Naive thymus-derived CD4-positive, alpha-beta T cell (primary cell): ENCODE measurements at regions of chr9 and their contacts with region 1.

Region 1: DNA sequence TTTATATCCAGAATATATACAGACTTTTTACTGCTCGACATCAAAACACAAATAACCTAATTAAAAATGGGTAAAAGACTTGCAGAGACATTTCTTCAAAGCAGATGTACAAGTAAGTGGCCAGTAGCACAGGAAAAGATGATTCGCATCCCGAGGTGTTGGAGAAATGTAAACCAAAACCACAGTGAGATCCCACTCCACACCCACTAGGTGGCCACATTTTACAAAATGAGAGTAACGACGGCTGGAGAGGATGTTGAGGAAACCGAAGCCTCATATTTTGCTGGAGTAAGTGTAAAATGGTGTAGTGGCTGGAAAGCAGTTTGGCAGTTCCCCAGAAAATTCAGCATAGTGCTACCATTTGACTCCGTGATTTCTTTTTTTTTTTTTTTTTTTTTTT is 21.2 kb upstream of the GBGT1 start:
- DNase-seq: peak in 8 of 9 donors; percentile 15 to 59 (median 38)
- ATAC-seq: peak; percentile 72
- H3K4me3 ChIP-seq: no peak overlapping the region
- H3K4me3 Mint-ChIP-seq: peak overlapping the region in 5 of 10 donors; percentile 2 to 47 (median 38)
- H3K27ac ChIP-seq: no peak overlapping the region
- H3K27ac Mint-ChIP-seq: peak overlapping the region in 1 of 9 donors; percentile 38
- H3K4me1 ChIP-seq: peaks cover 0 to 5% of the 10 kb centered on the region in 2 donors
- H3K4me1 Mint-ChIP-seq: peaks cover 8 to 18% (median 12%) of the 10 kb centered on the region in 7 donors
- H3K27me3 ChIP-seq: peaks cover 0 to 3% of the 10 kb centered on the region in 2 donors
- H3K27me3 Mint-ChIP-seq: peaks cover 12 to 52% (median 18%) of the 10 kb centered on the region in 5 donors

Region 2: GRCh38 chr9:133275105-133276000 is 90.4 kb after region 1 on chr9 and contains the start of gene ABO:
- CTCF ChIA-PET with region 1: no interaction called
- POLR2A ChIA-PET with region 1: no interaction called
- intact Hi-C with region 1: loop called in 1 of 2 experiments (anchors 5 kb)
- DNase-seq: peak in 1 of 9 donors; percentile 33
- ATAC-seq: peak; percentile 48
- H3K4me3 ChIP-seq: no peak within 1 kb of the TSS
- H3K4me3 Mint-ChIP-seq: peak within 1 kb of the TSS in 6 of 10 donors; percentile 4 to 64 (median 30)
- H3K27ac ChIP-seq: no peak within 1 kb of the TSS
- H3K27ac Mint-ChIP-seq: peak within 1 kb of the TSS in 1 of 9 donors; percentile 66
- H3K4me1 ChIP-seq: no peaks in the 10 kb centered on the region
- H3K4me1 Mint-ChIP-seq: peaks cover 0 to 14% (median 4%) of the 10 kb centered on the region in 7 donors
- H3K27me3 ChIP-seq: no peaks in the 10 kb centered on the region
- H3K27me3 Mint-ChIP-seq: peaks cover 36 to 60% (median 49%) of the 10 kb centered on the region in 5 donors
- total RNA-seq, gene ABO: 1.7 to 3.3 TPM in 2 of 5 experiments, not detected in the others

Region 3: DNA sequence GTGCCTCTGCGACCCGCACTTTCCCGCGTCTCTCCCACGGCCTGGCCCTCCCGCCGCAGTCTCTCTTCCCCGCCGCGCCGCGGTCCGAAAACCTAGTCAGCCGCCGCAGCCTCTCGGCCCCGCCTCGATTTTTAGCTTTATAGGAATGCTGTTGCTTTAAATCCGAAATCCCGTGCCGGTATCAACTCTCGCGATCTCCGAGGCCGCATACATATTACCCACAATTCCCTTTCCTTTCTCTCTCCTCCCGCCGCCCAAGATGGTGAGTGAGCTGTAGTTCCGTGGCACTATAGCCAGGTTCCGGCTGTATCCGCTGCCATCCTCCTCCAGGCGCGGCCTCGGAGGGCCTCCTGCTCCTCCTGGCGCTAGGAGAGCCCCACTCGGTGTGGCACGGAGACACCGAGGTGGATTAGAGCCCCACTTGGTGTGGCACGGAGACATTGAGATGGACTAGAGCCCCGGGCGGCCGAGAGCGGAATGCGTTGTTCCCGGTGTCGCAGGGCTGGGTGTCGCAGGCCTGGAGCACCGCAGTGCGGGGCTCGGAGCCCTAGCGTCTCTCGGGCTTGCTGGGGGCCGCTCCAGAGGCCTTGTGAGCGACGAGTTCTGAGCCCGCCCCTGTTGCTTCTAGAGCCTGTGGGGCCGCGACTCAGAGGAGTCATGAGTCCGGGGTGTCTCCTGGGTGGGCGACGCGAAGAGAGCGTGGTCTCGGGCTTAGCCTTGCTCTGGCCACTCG is 163.2 kb after region 1 on chr9 and contains the starts of genes MED22 and RPL7A:
- CTCF ChIA-PET with region 1: interaction called, 3 read pairs
- POLR2A ChIA-PET with region 1: no interaction called
- intact Hi-C with region 1: loop called in 1 of 2 experiments (anchors 1 kb)
- DNase-seq: peak; percentile 72 to 95 (median 92)
- ATAC-seq: peak; percentile 95
- H3K4me3 ChIP-seq: peak within 1 kb of the TSS; percentile 93
- H3K4me3 Mint-ChIP-seq: peak within 1 kb of the TSS; percentile 94 to 100 (median 98)
- H3K27ac ChIP-seq: peak within 1 kb of the TSS; percentile 98
- H3K27ac Mint-ChIP-seq: peak within 1 kb of the TSS; percentile 87 to 99 (median 97)
- H3K4me1 ChIP-seq: peaks cover 19 to 20% of the 10 kb centered on the region in 2 donors
- H3K4me1 Mint-ChIP-seq: peaks cover 23 to 46% (median 39%) of the 10 kb centered on the region in 7 donors
- H3K27me3 ChIP-seq: no peaks in the 10 kb centered on the region
- H3K27me3 Mint-ChIP-seq: peaks cover 0 to 2% (median 0%) of the 10 kb centered on the region in 5 donors
- total RNA-seq, gene MED22: 26.5 to 44.6 (median 32.8) TPM
- total RNA-seq, gene RPL7A: 2,002 to 2,815 (median 2,428) TPM

Region 4: GRCh38 chr9:133375724-133376654 is 191.0 kb after region 1 on chr9 and contains the starts of genes STKLD1 and SURF4:
- CTCF ChIA-PET with region 1: interaction called, 21 read pairs
- POLR2A ChIA-PET with region 1: interaction called, 3 read pairs
- intact Hi-C with region 1: loop called (anchors 1 to 10 kb)
- DNase-seq: peak; percentile 86 to 99 (median 93)
- ATAC-seq: peak; percentile 95
- H3K4me3 ChIP-seq: peak within 1 kb of the TSS; percentile 58
- H3K4me3 Mint-ChIP-seq: peak within 1 kb of the TSS; percentile 84 to 98 (median 92)
- H3K27ac ChIP-seq: peak within 1 kb of the TSS; percentile 98
- H3K27ac Mint-ChIP-seq: peak within 1 kb of the TSS; percentile 72 to 99 (median 96)
- H3K4me1 ChIP-seq: peaks cover 31 to 38% of the 10 kb centered on the region in 2 donors
- H3K4me1 Mint-ChIP-seq: peaks cover 26 to 47% (median 34%) of the 10 kb centered on the region in 7 donors
- H3K27me3 ChIP-seq: no peaks in the 10 kb centered on the region
- H3K27me3 Mint-ChIP-seq: peaks cover 0 to 4% (median 0%) of the 10 kb centered on the region in 5 donors
- total RNA-seq, gene STKLD1: 1.1 to 1.8 (median 1.5) TPM
- total RNA-seq, gene SURF4: 72.5 to 196 (median 75.1) TPM

Region 5: DNA sequence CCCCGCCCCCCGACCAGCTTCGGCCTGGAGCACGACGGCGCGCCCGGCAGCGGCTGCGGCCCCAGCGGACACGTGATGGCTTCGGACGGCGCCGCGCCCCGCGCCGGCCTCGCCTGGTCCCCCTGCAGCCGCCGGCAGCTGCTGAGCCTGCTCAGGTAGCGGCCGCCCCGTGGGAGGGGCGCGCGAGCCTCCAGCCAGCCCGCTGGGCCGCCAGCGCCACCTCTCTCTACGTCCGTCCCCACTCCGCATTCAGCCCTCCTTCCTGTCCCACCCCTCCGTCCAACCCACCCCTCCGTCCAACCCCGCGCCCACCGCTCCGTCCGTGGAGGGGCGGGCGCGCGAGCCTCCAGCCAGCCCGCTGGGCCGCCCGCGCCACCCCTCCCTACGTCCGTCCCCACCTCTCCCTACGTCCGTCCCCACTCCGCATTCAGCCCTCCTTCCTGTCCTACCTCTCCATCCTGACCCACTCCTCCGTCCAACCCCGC is 243.7 kb after region 1 on chr9:
- CTCF ChIA-PET with region 1: no interaction called
- POLR2A ChIA-PET with region 1: no interaction called
- intact Hi-C with region 1: loop called in 1 of 2 experiments (anchors 1 kb)
- DNase-seq: no peak
- ATAC-seq: no peak
- H3K4me3 ChIP-seq: no peak overlapping the region
- H3K4me3 Mint-ChIP-seq: peak overlapping the region in 1 of 10 donors; percentile 80
- H3K27ac ChIP-seq: no peak overlapping the region
- H3K27ac Mint-ChIP-seq: no peak overlapping the region
- H3K4me1 ChIP-seq: no peaks in the 10 kb centered on the region
- H3K4me1 Mint-ChIP-seq: peaks cover 0 to 8% (median 6%) of the 10 kb centered on the region in 7 donors
- H3K27me3 ChIP-seq: no peaks in the 10 kb centered on the region
- H3K27me3 Mint-ChIP-seq: peaks cover 8 to 30% (median 20%) of the 10 kb centered on the region in 5 donors

Region 6: DNA sequence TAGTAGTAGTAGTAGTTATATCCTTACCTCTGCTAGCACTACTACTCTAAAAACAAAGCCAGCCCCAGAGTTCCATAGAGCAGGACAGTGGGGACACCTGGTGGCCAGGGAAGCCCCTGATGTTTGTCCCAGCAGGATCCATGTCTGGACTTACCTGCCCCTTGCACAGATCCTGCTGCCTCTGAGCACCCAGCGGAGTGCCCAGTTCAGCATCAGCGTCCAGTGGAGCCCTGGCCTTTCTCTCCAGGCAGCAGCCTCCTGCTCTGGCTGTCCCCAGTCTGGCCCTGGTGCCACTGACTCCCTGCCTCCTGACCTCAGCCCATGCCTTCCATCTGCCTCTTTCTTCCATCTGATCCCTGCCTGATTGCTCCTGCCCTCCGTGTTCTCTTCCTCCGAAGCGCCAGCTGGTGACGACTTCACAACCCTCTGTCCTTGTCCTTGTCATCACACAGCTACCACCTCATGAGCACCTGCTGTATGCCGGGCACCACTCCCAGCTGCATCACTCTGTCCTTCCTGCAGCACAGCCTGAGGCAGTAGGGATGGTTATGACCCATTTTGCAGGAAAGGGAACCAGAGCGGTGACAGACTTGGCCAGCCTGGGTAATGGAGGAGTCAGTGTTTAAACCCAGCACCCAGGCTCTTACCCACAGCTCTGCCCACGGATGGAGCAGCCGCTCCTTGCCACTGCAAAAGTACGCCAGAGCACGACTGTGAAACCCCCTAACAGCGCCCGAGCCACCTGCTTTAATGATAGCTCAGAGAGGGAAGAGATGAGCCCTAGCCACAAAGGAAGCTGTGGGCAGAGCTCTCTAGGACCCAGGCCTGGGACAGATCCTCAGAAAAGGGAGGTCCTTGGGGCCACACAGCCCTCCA is 541.7 kb after region 1 on chr9:
- CTCF ChIA-PET with region 1: no interaction called
- POLR2A ChIA-PET with region 1: no interaction called
- intact Hi-C with region 1: loop called in 1 of 2 experiments (anchors 10 kb)
- DNase-seq: peak in 8 of 9 donors; percentile 46 to 69 (median 64)
- ATAC-seq: peak; percentile 74
- H3K4me3 ChIP-seq: no peak overlapping the region
- H3K4me3 Mint-ChIP-seq: no peak overlapping the region
- H3K27ac ChIP-seq: no peak overlapping the region
- H3K27ac Mint-ChIP-seq: peak overlapping the region in 2 of 9 donors; percentile 10 to 76
- H3K4me1 ChIP-seq: no peaks in the 10 kb centered on the region
- H3K4me1 Mint-ChIP-seq: peaks cover 0 to 9% (median 7%) of the 10 kb centered on the region in 7 donors
- H3K27me3 ChIP-seq: no peaks in the 10 kb centered on the region
- H3K27me3 Mint-ChIP-seq: peaks cover 0 to 14% (median 0%) of the 10 kb centered on the region in 5 donors